Activated T-helper 2 cell treated with anti-CD3 and anti-CD28 coated beads, Interferon-gamma antibody, Interleukin-2, Interleukin-4, amounts not matched to agents 10 μg/mL and 5 μg/mL and 100 μg/mL, durations not matched to agents 14 hours and 24 hours and 36 hours (primary cell): ENCODE measurements at regions of chr11 and their contacts with region 1.

Region 1: GRCh38 chr11:124673333-124674167 is at the starts of genes SIAE and SPA17:
- DNase-seq: peak; percentile 84
- H3K4me3 Mint-ChIP-seq: peak within 1 kb of the TSS; percentile 88
- H3K27ac Mint-ChIP-seq: peak within 1 kb of the TSS; percentile 86
- H3K4me1 Mint-ChIP-seq: peaks cover 36% of the 10 kb centered on the region
- H3K27me3 Mint-ChIP-seq: no peaks in the 10 kb centered on the region
- total RNA-seq, gene SIAE: 5.0 and 5.2 TPM in 2 replicates
- total RNA-seq, gene SPA17: 2.3 and 2.9 TPM in 2 replicates

Region 2: DNA sequence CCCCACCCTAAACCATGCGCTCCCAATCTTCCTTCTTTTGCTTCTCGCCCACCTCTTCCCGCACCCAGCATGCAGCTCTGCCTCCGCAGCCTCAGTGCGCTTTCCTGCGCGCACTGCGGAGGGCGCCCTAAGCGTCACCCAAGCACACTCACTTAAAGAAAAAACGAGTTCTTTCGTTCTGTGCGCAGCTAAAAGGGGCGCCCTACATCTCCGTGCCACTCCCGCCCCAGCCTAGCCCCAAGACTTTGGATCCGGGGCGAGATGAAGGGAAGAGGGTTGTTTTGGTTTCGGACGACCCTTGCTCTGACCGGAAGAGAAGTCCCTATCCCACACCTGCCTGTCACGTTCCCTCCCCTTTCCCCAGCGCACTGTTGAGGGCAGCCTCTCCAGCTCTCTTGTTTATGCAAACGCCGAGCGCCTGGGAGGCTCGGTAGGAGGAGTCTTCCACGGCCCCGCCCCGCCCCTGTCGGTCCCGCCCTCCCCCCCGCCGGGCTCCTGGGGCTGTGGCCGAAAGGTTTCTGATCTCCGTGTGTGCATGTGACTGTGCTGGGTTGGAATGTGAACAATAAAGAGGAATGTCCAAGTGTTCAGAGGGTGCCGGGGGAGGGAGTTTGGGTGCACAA is 73.2 kb after region 1 on chr11:
- intact Hi-C with region 1: loop called (anchors 1 kb)
- DNase-seq: peak; percentile 69
- H3K4me3 Mint-ChIP-seq: peak overlapping the region; percentile 95
- H3K27ac Mint-ChIP-seq: peak overlapping the region; percentile 94
- H3K4me1 Mint-ChIP-seq: peaks cover 14% of the 10 kb centered on the region
- H3K27me3 Mint-ChIP-seq: peaks cover 8% of the 10 kb centered on the region

Region 3: GRCh38 chr11:124800226-124800929 is 126.8 kb after region 1 on chr11 and contains the start of gene MSANTD2:
- intact Hi-C with region 1: loop called (anchors 1 kb)
- DNase-seq: peak; percentile 76
- H3K4me3 Mint-ChIP-seq: peak within 1 kb of the TSS; percentile 92
- H3K27ac Mint-ChIP-seq: peak within 1 kb of the TSS; percentile 80
- H3K4me1 Mint-ChIP-seq: peaks cover 27% of the 10 kb centered on the region
- H3K27me3 Mint-ChIP-seq: peaks cover 11% of the 10 kb centered on the region
- total RNA-seq, gene MSANTD2: 10.5 and 10.8 TPM in 2 replicates

Region 4: DNA sequence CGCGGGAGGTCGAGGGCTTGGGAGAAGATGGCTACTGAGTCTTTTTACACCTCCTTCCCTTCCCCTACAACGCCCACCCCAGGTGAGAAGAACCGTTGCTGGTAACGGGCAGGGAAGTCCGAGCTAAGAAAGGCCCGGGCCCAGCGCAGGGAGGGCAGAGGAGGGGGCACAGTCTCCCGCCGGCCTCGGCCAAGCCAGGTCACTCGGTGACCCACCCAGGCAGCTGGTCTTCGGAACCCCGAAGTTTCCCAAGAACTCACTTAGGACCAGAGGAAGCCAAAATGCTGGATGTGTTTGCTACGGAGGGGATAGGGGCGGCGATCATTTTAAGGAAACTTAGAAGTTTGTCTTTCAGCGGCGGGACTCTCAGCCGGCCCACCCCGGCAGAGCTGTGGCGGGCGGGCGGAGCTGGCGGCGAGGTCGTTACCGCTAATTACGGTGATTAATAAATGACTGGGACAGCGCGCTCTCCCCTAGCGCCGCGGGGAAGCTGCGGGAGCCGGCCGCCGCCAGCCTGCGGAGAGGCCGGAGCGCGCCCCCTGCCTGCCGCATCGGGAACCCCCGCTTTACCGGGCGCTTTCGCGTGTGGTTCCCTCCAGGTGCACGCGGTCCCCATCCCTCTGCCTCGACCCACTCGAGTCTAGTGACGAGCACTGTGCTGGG is 192.5 kb after region 1 on chr11:
- intact Hi-C with region 1: loop called (anchors 1 kb)
- DNase-seq: peak; percentile 41
- H3K4me3 Mint-ChIP-seq: no peak overlapping the region
- H3K27ac Mint-ChIP-seq: no peak overlapping the region
- H3K4me1 Mint-ChIP-seq: peaks cover 9% of the 10 kb centered on the region
- H3K27me3 Mint-ChIP-seq: peaks cover 93% of the 10 kb centered on the region

Region 5: DNA sequence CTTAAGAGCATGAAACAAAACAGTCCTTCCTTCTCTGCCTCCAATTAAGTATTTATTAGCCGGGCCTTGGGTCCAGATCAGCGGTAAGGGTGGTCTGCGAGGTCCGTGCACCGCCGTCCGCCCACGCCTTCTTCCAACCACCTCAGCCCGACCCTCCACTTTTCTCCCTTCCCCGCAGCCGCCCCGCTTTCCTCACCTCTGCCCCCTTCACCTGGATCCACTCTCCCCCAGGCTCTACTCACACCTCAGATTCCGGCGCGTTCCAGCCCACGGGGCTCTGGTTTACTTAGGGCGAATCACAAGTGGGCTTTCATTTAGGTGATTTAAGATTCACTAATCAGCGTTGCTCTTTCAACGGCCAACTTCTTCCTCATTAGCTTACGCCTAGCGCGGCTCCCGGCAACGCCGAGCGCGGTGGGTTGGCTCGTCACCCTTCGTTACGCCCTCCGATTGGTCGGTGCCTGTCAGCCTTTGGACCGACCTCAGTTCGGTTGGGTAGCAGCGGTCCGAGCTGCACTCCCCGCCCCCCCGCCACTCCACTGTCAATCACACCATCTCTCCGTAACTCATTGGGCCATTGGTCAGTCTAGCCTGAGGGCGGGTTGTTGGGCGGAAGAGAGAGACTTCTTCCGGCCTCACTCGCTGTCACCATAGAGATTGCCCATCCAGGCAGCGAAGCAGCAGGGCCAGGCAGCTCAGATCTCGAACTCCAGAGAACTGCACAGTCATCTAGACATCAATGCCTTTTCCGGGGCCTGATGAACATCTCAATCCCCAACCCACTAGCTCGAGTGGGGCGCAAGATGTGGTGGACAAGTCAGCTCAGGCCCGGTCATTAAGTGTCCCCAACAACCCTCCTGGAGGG is 438.0 kb after region 1 on chr11 and contains the start of gene TMEM218:
- intact Hi-C with region 1: loop called (anchors 2 kb)
- DNase-seq: peak; percentile 97
- H3K4me3 Mint-ChIP-seq: peak within 1 kb of the TSS; percentile 100
- H3K27ac Mint-ChIP-seq: peak within 1 kb of the TSS; percentile 100
- H3K4me1 Mint-ChIP-seq: peaks cover 22% of the 10 kb centered on the region
- H3K27me3 Mint-ChIP-seq: peaks cover 6% of the 10 kb centered on the region
- total RNA-seq, gene TMEM218: 17.9 and 18.1 TPM in 2 replicates